Heart left ventricle (tissue), 16 donors: ENCODE measurements at regions of chr6 and their contacts with region 1.

Region 1: DNA sequence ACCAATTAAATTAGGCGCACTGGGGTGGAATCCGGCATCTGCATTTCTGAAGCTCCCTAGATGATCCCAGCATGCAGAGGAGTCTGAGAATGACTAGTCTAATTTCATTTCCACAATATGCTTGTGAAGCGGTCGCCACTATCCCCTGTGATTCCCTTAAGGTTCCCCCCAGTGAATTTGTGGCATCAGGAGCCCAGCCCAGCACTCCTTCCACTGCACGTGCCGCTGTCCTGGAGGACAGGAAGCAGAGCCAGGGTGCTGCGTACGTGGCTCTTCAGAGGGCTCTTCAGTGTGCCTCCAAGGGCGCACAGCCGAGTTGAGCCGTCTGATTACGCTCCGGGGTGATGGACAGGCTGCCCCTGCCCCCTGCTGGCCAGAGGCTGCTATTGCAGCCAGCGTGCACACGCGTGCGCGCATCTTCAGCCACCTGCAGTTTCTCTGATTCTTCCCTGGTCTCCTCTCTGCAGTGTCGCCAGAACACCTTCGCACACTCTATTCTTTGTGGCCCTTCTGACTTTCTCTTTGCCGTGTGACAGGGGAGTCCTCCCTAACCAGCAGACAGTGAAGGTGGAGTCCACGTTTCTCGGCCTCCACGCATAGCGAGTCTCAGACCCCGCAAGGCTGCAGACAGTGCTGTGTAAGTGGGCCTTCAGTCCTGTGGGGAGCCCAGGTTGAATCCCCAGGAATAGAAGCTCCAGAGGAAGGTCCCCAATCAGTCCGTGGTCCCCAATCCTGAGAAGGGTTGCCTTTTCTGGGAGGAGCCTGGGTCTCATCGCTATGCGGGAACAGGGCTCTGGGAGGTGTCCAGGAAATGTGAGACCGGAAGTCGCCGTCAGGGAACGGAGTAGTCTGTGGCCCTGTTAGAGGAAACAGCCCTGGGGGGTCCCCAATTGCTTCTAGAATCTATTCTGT is 16.5 kb upstream of the NCR2 start:
- DNase-seq: peak; percentile 69 to 91 (median 84)
- ATAC-seq: peak; percentile 92 to 98 (median 96)
- H3K4me3 ChIP-seq: peak overlapping the region in 10 of 12 donors; percentile 6 to 43 (median 30)
- H3K27ac ChIP-seq: no peak overlapping the region
- H3K4me1 ChIP-seq: peaks cover 0 to 12% (median 1%) of the 10 kb centered on the region in 12 donors
- H3K27me3 ChIP-seq: peaks cover 0 to 53% (median 8%) of the 10 kb centered on the region in 9 donors
- CTCF ChIP-seq: peak; percentile 98 to 100 (median 99)
- POLR2A ChIP-seq: no peak

Region 2: GRCh38 chr6:41092421-41093140 is 226.3 kb before region 1 on chr6:
- intact Hi-C with region 1: loop called in 8 of 10 experiments (anchors 2 to 10 kb)
- DNase-seq: no peak
- ATAC-seq: no peak
- H3K4me3 ChIP-seq: no peak overlapping the region
- H3K27ac ChIP-seq: no peak overlapping the region
- H3K4me1 ChIP-seq: peaks cover 0 to 8% (median 0%) of the 10 kb centered on the region in 12 donors
- H3K27me3 ChIP-seq: no peaks in the 10 kb centered on the region
- CTCF ChIP-seq: peak in 7 of 12 donors; percentile 16 to 41 (median 33)
- POLR2A ChIP-seq: no peak

Region 3: DNA sequence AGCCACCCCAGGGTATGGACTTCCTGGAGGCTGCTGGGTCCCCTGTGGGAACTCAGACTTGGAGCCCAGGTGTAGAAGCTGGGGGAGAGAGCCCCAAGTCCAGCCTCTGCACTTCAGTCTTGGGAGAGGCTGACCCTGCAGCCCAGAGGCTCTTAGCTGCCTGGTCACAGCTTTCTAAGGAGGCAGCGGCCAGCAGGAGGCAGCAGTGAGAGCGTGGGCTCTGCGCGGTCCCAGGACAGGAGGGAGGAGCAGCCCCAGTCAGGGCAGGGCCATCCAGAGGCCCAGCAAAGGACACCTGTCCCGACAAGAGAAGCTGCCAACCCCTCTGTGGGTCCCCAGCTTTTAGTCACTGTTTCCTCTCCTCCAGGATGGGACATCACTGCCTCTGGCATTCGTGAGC is 127.3 kb before region 1 on chr6:
- intact Hi-C with region 1: loop called in 1 of 10 experiments (anchors 5 kb)
- DNase-seq: peak in 2 of 5 donors; percentile 31 to 81
- ATAC-seq: peak in 2 of 4 donors; percentile 47 to 77
- H3K4me3 ChIP-seq: no peak overlapping the region
- H3K27ac ChIP-seq: no peak overlapping the region
- H3K4me1 ChIP-seq: no peaks in the 10 kb centered on the region
- H3K27me3 ChIP-seq: peaks cover 0 to 31% (median 2%) of the 10 kb centered on the region in 9 donors
- CTCF ChIP-seq: peak in 11 of 12 donors; percentile 14 to 54 (median 31)
- POLR2A ChIP-seq: no peak

Region 4: GRCh38 chr6:41278699-41279405 is 40.1 kb before region 1 on chr6:
- intact Hi-C with region 1: loop called in 1 of 10 experiments (anchors 2 kb)
- DNase-seq: peak in 4 of 5 donors; percentile 52 to 60 (median 56)
- ATAC-seq: peak in 3 of 4 donors; percentile 51 to 70 (median 65)
- H3K4me3 ChIP-seq: no peak overlapping the region
- H3K27ac ChIP-seq: peak overlapping the region in 1 of 12 donors; percentile 55
- H3K4me1 ChIP-seq: peaks cover 0 to 49% (median 0%) of the 10 kb centered on the region in 12 donors
- H3K27me3 ChIP-seq: peaks cover 0 to 20% (median 0%) of the 10 kb centered on the region in 9 donors
- CTCF ChIP-seq: peak; percentile 20 to 59 (median 40)
- POLR2A ChIP-seq: no peak

Region 5: DNA sequence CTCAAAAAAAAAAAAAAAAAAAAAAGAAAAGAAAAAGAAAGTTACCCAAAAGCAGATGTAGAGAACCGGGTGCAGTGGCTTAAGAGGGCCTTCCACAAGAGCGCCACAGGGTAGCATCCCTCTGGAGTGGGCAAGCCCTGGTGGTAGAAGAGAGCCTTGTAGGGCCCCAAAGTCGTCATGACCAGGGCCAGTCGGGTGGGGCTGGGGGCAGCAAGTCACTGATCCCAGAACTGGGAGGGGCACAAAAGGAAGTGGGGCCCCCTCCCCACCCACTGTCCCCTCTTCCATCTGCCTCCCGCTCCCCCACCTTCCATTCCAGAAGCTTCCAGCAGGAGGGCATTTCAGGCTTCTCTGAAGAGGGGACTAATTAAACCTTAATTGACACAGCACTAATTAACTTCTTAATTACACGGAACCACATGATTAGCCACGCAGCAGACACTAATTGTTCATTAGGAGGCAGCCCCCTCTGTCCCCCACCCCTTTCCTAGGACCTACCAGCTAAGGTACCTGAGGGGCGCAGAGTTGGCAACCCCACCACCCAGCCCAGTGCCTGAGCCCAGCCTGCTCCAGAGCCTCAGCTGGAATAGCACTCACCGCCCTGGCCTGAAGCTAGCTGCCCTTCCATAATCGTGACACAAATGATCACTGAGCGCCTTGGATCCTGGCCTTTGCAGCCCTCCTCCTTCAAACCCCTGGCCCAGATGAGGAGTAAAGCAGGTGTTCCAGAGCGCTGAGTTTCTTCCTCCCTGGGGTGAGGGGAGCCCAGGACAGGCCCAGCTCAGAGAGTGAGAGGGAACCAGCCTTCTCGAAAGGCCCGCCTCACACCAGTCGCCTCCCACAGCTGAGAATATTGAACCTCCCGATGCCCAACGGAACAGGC is 354.2 kb after region 1 on chr6:
- intact Hi-C with region 1: no loop called
- DNase-seq: no peak
- ATAC-seq: no peak
- H3K4me3 ChIP-seq: no peak overlapping the region
- H3K27ac ChIP-seq: no peak overlapping the region
- H3K4me1 ChIP-seq: no peaks in the 10 kb centered on the region
- H3K27me3 ChIP-seq: no peaks in the 10 kb centered on the region
- CTCF ChIP-seq: no peak
- POLR2A ChIP-seq: no peak